GM12878 (cell line): ENCODE measurements at regions of chrX and their contacts with region 1.

Region 1: DNA sequence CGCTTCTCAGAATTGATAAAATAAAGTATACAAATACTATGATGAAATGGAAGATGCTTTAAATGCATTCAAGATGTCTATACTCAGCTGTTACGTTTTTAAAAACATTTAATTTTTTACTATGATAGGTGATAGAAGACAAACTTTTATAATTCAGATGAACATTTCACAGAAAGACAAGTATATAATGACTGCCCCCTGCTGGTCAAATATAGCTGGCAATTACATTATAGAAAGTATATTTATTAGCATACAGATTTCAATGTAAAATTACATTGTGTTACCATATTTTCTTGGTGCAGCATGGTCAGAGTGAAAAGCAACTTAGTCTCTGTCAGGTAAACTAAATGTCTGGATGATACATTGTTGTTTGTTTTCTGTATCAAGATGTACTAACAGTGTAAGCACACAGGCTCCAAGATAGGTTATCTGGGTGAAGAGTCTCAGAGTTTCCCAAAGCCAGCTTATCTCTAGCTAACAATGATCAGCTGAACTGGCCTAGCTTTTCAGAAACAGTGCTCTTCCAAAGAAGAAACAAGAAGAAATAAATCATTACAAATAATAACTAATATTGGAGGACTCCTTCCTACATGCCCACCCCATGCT is 54.1 kb downstream of the SRPX start:
- DNase-seq: no peak
- ATAC-seq: peak; percentile 51
- H3K4me3 ChIP-seq: no peak overlapping the region
- H3K27ac ChIP-seq: no peak overlapping the region
- H3K4me1 ChIP-seq: no peaks in the 10 kb centered on the region
- H3K27me3 ChIP-seq: no peaks in the 10 kb centered on the region; a peak in 1 of 4 replicates
- CTCF ChIP-seq: peak; percentile 34 to 52 (median 45); a peak in 3 of 6 replicates
- EP300 ChIP-seq: no peak
- POLR2A ChIP-seq: no peak
- RAD21 ChIP-seq: peak; percentile 61

Region 2: DNA sequence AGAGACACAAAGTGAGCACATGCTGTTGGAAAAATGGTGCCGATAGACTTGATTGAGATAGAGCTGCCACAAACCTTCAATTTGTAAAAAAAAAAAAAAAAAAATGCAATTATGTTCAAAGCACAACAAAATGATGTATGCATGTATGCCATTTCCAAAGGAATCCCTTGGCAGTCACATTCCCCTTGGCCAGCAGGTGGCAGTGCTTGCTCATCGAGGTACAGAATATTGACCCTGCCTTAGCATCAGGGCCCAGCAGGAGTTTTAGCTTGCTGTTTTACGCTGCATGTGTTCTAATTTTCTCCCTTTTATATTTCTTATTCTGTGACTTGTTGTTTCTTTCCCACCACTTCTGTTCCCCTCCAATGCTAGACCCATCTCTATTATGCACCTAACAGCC is 421.2 kb before region 1 on chrX:
- CTCF ChIA-PET with region 1: interaction called, 19 read pairs
- POLR2A ChIA-PET with region 1: no interaction called
- RAD21 ChIA-PET with region 1: interaction called, 4 read pairs
- SMC1A ChIA-PET with region 1: interaction called, 9 read pairs
- in situ Hi-C with region 1: loop called (anchors 10 kb)
- intact Hi-C with region 1: no loop called
- DNase-seq: peak; percentile 53
- ATAC-seq: peak; percentile 86
- H3K4me3 ChIP-seq: no peak overlapping the region
- H3K27ac ChIP-seq: peak overlapping the region; percentile 69
- H3K4me1 ChIP-seq: peaks cover 15% of the 10 kb centered on the region
- H3K27me3 ChIP-seq: no peaks in the 10 kb centered on the region; a peak in 1 of 4 replicates
- CTCF ChIP-seq: peak; percentile 84 to 91 (median 84)
- EP300 ChIP-seq: no peak
- POLR2A ChIP-seq: no peak
- RAD21 ChIP-seq: peak; percentile 97

Region 3: DNA sequence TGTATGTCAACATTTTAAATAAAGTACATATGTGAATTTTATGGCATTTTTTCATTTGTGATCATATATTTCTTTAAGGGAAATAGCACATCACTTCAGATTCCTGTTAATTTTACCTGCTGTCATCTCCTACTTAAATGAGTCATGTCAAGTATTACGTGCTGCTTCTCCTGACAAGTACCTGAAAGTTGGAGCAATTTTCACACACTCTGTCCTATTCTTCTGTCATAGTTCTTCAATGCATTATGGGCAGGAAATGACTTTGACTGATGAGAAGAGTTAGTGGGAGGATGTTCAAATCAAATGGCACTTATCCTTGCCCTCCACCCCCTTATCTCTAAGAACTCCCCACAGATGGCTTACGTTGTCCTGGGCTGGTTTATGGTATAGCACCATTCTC is 224.4 kb before region 1 on chrX:
- CTCF ChIA-PET with region 1: interaction called, 11 read pairs
- POLR2A ChIA-PET with region 1: no interaction called
- RAD21 ChIA-PET with region 1: no interaction called
- SMC1A ChIA-PET with region 1: no interaction called
- in situ Hi-C with region 1: no loop called
- intact Hi-C with region 1: no loop called
- DNase-seq: no peak
- ATAC-seq: no peak
- H3K4me3 ChIP-seq: no peak overlapping the region
- H3K27ac ChIP-seq: no peak overlapping the region
- H3K4me1 ChIP-seq: no peaks in the 10 kb centered on the region
- H3K27me3 ChIP-seq: no peaks in the 10 kb centered on the region; a peak in 1 of 4 replicates
- CTCF ChIP-seq: no peak
- EP300 ChIP-seq: no peak
- POLR2A ChIP-seq: no peak
- RAD21 ChIP-seq: no peak

Region 4: DNA sequence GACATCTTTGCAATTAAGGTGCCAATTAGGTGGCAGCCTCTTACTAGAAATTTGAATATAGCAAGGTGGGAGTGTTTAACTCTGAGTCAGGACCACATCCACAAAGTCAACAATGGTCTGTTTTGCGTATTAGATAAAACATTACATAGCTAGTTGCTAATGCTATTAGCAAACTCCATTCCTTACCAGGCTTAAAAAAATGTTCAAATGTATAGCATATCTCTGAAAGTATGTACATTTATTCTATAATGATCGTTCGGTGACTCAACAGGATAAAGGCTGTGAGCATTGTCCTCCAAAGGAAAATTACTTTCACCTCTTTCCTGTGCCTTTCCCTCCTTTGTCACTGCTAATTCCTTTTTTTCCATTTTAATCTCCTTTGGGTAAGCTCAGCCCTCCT is 85.8 kb before region 1 on chrX:
- CTCF ChIA-PET with region 1: interaction called, 21 read pairs
- POLR2A ChIA-PET with region 1: no interaction called
- RAD21 ChIA-PET with region 1: interaction called, 4 read pairs
- SMC1A ChIA-PET with region 1: interaction called, 11 read pairs
- in situ Hi-C with region 1: no loop called
- intact Hi-C with region 1: no loop called
- DNase-seq: no peak
- ATAC-seq: no peak
- H3K4me3 ChIP-seq: no peak overlapping the region
- H3K27ac ChIP-seq: no peak overlapping the region
- H3K4me1 ChIP-seq: no peaks in the 10 kb centered on the region
- H3K27me3 ChIP-seq: no peaks in the 10 kb centered on the region
- CTCF ChIP-seq: no peak
- EP300 ChIP-seq: no peak
- POLR2A ChIP-seq: no peak
- RAD21 ChIP-seq: no peak

Region 5: DNA sequence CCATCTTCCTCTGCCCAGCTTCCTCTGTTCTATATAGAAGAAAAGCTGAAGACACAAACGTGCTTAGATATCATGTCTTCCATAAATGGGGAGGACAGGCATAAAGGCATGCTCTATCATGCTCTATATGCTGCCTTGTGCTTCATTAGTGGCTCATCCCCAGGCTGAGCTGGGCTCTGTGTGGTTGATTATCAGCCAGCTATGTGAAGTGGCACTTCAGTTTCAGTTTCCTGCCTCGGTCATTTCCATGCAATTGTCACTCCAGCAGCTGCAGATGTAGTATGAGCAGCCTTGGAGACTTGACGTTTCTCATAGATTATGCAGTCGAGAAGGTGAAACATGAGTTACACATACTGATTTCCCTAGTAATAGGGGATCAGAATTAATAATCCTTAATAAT is 54.0 kb before region 1 on chrX:
- CTCF ChIA-PET with region 1: interaction called, 11 read pairs
- POLR2A ChIA-PET with region 1: no interaction called
- RAD21 ChIA-PET with region 1: interaction called, 3 read pairs
- SMC1A ChIA-PET with region 1: interaction called, 6 read pairs
- in situ Hi-C with region 1: no loop called
- intact Hi-C with region 1: no loop called
- DNase-seq: peak; percentile 31
- ATAC-seq: peak; percentile 87
- H3K4me3 ChIP-seq: no peak overlapping the region
- H3K27ac ChIP-seq: no peak overlapping the region
- H3K4me1 ChIP-seq: no peaks in the 10 kb centered on the region
- H3K27me3 ChIP-seq: no peaks in the 10 kb centered on the region
- CTCF ChIP-seq: no peak
- EP300 ChIP-seq: no peak
- POLR2A ChIP-seq: no peak
- RAD21 ChIP-seq: no peak